ENCODE measurements at regions of chr2 and their contacts with region 1.

Region 1: GRCh38 chr2:54522624-54523281 is 66.6 kb downstream of the SPTBN1 start:
- DNase-seq: peak; percentile 73
- CTCF ChIP-seq: peak; percentile 68

Region 2: GRCh38 chr2:54106631-54107454 is 415.9 kb before region 1 on chr2:
- CTCF ChIA-PET with region 1: interaction called, 15 read pairs
- POLR2A ChIA-PET with region 1: no interaction called
- DNase-seq: peak; percentile 42
- CTCF ChIP-seq: peak; percentile 66

Region 3: DNA sequence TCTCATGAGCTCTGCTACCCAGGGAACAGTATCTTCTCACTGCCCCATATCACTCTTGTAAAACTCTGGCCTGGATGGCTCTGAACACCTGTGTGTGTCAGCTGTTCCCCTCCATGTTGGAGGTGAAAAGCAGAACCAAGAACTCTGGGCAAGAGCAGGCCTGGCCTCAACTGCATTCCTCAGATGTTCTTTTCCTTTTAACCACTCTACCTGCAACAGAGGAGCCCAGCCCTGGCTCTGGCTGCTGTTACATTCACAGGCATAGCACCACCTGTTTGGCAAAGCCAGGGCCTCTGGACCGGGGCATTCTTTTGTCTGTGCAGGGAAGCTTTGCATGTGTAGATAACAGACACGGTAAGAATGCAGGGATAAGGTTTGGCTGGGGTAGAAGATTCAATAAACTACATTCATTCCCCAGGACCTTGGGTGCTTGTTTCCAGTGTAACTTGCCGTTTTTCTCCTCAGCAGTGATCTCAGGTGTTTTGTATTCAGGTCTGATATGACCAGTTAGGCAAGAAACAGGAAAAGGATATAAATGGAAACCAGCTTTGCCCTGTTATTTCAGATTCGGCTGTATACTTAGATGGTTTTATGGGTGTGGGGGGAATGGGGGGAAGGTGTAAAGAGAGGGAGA is 28.5 kb after region 1 on chr2:
- CTCF ChIA-PET with region 1: interaction called, 13 read pairs
- POLR2A ChIA-PET with region 1: no interaction called
- DNase-seq: no peak
- CTCF ChIP-seq: no peak

Region 4: DNA sequence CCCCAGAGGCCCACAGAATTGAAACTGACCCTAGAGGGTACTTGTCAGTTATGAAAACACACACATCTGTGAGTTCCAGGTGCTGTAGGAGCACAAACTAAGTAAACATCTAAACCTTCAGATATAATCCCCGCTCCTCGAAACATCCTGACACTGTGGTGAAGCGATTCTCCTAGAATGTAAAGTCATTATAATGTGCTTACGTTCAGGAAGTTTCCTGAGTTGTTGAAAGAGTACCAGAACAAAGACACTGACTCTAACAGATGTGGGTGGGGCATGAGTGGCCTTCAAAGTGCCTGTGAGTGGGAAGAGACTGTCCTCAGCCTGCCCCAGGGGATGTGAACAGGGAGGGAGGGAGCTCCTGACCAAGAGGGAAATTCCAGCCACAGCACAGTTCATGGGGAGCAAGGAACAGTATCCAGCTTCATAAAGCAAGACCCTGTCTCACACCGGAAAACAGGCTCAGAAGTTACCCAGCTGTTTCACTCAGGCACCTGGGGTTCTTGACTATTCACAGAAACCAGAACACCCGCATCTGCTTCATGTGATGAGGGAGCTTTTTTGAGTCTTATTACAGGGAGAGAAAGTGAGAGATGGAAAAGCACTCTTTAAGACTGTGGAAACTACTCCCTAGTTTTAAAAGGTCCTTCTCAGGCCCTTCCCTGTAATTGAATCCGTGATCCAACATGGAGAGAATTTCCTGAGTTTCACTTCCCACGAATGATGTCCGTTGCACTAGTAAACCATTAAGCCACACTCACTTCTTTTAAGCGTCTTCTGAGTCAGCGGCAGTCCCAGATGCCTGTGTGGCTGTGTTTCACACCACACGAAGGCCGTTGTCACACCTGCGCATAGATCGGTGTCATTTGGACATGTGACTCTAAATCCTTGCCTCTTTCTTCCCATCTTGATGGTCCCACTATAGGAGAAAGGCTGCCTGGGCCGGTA is 112.1 kb after region 1 on chr2:
- CTCF ChIA-PET with region 1: interaction called, 15 read pairs
- POLR2A ChIA-PET with region 1: no interaction called
- DNase-seq: peak; percentile 74
- CTCF ChIP-seq: no peak

Region 5: DNA sequence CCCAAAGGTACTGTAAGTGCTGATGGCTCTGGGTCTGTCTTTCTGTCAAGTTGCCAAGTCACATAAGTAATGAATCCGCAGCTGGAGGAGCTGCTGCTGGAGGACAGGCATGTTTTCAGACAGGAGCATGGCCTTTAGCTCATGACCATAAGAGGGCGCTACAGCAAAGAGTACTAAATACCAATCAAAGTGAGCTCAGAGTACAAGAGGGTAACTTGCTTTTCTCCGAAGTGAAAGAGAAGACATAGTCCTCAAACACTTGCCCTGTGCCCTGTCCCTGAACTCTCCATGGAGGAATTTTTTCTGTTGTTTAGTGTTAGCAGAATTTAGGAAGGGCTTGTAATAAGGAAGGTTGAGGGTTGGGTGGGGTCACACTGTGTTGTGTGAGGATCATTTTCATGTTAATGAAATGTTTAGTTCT is 142.7 kb after region 1 on chr2:
- CTCF ChIA-PET with region 1: interaction called, 33 read pairs
- POLR2A ChIA-PET with region 1: no interaction called
- DNase-seq: peak; percentile 38
- CTCF ChIP-seq: peak; percentile 54

Region 6: GRCh38 chr2:54838585-54839035 is 315.9 kb after region 1 on chr2:
- CTCF ChIA-PET with region 1: interaction called, 27 read pairs
- POLR2A ChIA-PET with region 1: no interaction called
- DNase-seq: peak; percentile 57
- CTCF ChIP-seq: peak; percentile 90